ENCODE measurements at regions of chr1 and their contacts with region 1.

Region 1: GRCh38 chr1:33094971-33095604 is 14.1 kb downstream of the AZIN2 start:
- DNase-seq: peak in 2 of 3 donors; percentile 17 to 23
- H3K4me3 ChIP-seq: peak overlapping the region in 1 of 7 experiments; percentile 5
- H3K27ac ChIP-seq: no peak overlapping the region
- H3K4me1 ChIP-seq: peaks cover 9 to 60% (median 49%) of the 10 kb centered on the region in 4 experiments
- H3K27me3 ChIP-seq: no peaks in the 10 kb centered on the region

Region 2: DNA sequence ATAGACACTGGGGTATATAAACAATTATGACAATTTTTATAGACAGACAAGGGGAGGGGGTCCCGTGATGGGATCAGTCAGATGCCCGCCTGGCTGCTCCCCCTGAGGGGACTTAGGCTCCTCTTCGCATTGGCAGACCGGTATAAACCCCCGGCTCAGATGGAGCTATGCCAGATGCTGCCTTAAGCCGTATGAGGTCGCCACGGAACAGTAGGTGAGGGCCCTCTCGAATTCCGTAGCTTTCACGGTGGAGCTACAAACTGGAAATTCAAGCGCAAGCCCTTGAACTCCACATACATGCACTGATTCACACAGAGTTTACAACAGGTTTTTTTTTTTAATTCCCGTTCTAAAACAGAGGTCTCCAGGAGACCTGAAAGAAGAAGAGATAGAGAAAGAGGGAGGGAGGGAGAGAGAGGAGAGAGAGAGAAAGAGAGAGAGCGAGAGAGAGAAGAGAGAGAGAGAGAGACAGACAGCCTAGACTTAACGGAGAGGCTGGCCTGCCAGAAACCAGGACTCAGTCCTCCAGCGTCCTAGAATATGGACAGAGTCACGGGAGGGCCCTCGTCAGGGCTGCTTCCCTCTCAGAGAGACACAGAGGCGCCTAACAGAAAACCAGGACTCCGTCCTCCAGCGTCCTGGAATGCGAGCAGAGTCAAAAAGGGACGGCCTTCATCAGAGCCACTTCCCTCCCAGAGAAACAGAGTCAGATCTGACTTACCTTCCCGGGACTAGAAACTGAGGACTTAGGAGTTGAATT is 169.5 kb before region 1 on chr1:
- CTCF ChIA-PET with region 1: no interaction called
- POLR2A ChIA-PET with region 1: no interaction called
- DNase-seq: peak; percentile 49 to 71 (median 66)
- H3K4me3 ChIP-seq: peak overlapping the region in 3 of 7 experiments; percentile 8 to 50 (median 47)
- H3K27ac ChIP-seq: no peak overlapping the region
- H3K4me1 ChIP-seq: peaks cover 0 to 16% (median 10%) of the 10 kb centered on the region in 4 experiments
- H3K27me3 ChIP-seq: peaks cover 4 to 56% (median 32%) of the 10 kb centered on the region in 5 experiments

Region 3: GRCh38 chr1:32992489-32993323 is 102.4 kb before region 1 on chr1:
- CTCF ChIA-PET with region 1: no interaction called
- POLR2A ChIA-PET with region 1: no interaction called
- DNase-seq: peak; percentile 96 to 99 (median 99)
- H3K4me3 ChIP-seq: peak overlapping the region in 2 of 7 experiments; percentile 24 to 41
- H3K27ac ChIP-seq: peak overlapping the region; percentile 4 to 41
- H3K4me1 ChIP-seq: peaks cover 27 to 79% (median 57%) of the 10 kb centered on the region in 4 experiments
- H3K27me3 ChIP-seq: no peaks in the 10 kb centered on the region

Region 4: DNA sequence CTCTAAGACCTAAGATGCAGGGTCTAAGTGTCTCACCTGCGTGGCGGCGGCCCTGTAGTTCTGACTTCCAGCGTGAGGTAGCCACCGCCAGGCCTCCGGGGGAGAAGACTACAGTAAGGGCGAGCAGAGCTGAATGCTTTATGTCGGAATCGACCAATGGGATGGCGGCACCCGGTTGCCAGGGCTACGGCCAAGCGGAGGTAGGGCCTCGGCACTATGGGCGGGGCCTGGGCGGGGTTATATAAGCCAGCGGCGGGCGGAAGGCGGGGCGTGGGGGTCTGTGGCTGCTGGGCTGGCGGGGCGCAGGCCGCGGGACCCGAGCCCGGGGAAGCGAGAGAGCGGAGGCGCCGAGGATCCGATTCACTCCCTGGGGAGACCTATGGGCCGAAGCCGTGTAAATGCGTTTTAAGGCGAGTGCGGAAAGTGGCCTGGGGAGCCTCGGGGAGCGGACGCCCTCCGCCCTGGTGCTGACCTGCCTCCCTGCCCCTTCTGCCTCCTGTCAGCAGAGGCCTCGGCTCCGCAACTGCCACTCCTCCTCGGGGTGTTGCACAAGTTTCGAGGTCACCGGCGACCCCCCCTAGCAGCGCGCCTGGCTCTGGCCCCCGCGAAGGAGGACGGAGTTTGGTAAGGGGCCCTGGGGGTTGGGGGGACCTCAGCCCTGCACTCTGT is 14.1 kb before region 1 on chr1 and contains the start of gene AZIN2:
- CTCF ChIA-PET with region 1: interaction called, 44 read pairs
- POLR2A ChIA-PET with region 1: interaction called, 4 read pairs
- DNase-seq: peak; percentile 91 to 96 (median 95)
- H3K4me3 ChIP-seq: peak within 1 kb of the TSS; percentile 17 to 86 (median 65)
- H3K27ac ChIP-seq: no peak within 1 kb of the TSS
- H3K4me1 ChIP-seq: peaks cover 0 to 20% (median 19%) of the 10 kb centered on the region in 4 experiments
- H3K27me3 ChIP-seq: peaks cover 0 to 43% (median 24%) of the 10 kb centered on the region in 5 experiments

Measured in common myeloid progenitor, CD34-positive (primary cell).